ENCODE measurements at regions of chr1 and their contacts with region 1.

Region 1: DNA sequence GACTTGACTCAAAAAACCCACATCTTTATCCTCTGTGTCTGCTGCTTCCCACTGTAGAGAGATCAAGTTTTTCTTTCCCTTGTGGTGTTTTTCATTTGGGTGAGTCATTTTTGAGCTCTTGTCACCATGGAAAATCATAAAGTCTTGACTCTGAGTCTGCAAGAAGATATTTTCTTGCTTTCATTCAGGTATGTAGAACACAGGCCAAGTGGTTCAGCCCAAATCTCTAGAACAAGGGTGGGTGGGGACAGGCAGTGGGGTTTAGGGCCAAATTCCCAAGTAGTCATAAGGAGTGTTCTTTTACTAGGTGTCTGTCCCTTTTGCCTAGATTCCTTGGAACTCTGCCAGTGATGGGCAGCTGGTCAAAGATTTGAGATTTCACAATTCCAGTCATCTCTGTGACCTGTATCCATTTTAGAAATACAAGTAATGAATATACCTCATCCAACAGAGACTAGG is 21.5 kb upstream of the ARHGAP29 start:
- DNase-seq: peak; percentile 99
- ATAC-seq: peak; percentile 69
- H3K4me3 ChIP-seq: no peak overlapping the region
- H3K27ac ChIP-seq: peak overlapping the region; percentile 98
- H3K4me1 ChIP-seq: peaks cover 64% of the 10 kb centered on the region
- H3K27me3 ChIP-seq: no peaks in the 10 kb centered on the region
- CTCF ChIP-seq: no peak

Region 2: DNA sequence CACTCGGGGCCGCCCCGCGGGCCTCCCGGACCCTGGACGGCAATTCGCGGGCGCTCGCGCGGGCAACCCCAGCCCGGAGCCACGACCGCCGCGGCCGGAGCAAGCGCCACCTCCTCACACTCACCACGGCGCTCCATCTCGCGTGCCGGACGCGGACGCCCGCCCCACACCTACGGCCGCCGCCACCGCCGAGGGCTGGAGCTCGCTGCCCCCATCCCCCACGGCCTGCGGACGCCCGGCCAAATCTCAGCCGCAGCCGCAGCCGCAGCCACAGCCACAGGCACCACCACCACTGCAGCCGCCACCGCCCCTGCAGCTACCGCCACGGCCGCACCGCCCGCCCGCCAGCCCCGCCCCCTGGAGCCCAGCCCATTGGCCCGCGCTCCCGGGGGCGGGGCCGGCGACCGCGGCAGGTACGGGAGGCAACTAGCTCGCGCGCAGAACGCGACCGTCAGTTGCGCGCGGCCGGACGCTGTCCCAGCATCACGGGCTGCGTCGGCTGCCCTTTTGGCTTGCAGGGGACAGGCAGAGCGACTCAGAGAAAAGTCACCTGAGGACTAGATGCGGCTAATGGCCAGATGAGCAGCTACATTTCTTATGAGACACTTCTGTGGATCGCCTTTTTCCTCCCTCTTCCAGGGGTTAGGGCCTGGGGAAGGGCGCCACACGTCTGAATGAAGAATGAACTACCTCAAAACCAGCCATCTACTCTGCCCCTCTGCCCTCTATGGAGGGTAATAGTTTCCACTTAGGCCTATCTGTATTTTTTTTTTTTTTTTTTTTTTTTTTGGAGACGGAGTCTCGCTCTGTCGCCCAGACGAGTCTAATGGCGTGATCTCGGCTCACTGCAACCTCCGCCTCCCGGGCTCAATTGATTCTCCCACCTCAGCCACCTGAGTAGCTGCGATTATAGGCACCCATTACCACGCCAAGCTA is 21.3 kb before region 1 on chr1 and contains the start of gene ARHGAP29:
- CTCF ChIA-PET with region 1: no interaction called
- POLR2A ChIA-PET with region 1: interaction called, 10 read pairs
- intact Hi-C with region 1: no loop called
- DNase-seq: peak; percentile 94
- ATAC-seq: peak; percentile 72
- H3K4me3 ChIP-seq: peak within 1 kb of the TSS; percentile 96
- H3K27ac ChIP-seq: peak within 1 kb of the TSS; percentile 77
- H3K4me1 ChIP-seq: peaks cover 64% of the 10 kb centered on the region
- H3K27me3 ChIP-seq: no peaks in the 10 kb centered on the region
- CTCF ChIP-seq: no peak
- total RNA-seq, gene ARHGAP29: 161 and 166 TPM in 2 replicates

Region 3: DNA sequence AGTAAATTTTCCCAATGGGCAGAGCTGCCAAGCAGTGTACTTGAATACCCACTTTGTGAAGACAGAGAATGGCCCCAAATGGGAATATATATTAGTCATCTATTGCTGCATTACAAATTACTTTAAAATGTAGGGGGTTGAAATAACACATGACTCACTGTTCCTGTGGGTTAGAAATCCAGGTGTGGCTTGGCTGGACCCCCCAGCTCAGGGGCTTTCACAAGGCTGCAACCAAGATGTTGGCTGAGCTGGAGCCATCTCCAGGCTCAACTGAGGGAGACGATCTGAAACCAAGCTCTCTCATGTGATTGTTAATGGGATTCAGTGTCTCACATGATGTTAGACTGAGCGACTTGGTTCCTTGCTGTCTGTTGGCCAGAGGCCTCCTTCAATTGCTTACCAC is 11.9 kb after region 1 on chr1:
- CTCF ChIA-PET with region 1: no interaction called
- POLR2A ChIA-PET with region 1: interaction called, 11 read pairs
- intact Hi-C with region 1: no loop called
- DNase-seq: peak; percentile 96
- ATAC-seq: peak; percentile 70
- H3K4me3 ChIP-seq: no peak overlapping the region
- H3K27ac ChIP-seq: peak overlapping the region; percentile 94
- H3K4me1 ChIP-seq: peaks cover 53% of the 10 kb centered on the region
- H3K27me3 ChIP-seq: no peaks in the 10 kb centered on the region
- CTCF ChIP-seq: no peak

Region 4: GRCh38 chr1:94305704-94306103 is 46.8 kb after region 1 on chr1:
- CTCF ChIA-PET with region 1: no interaction called
- POLR2A ChIA-PET with region 1: no interaction called
- intact Hi-C with region 1: loop called (anchors 1 kb)
- DNase-seq: peak; percentile 76
- ATAC-seq: no peak
- H3K4me3 ChIP-seq: no peak overlapping the region
- H3K27ac ChIP-seq: peak overlapping the region; percentile 82
- H3K4me1 ChIP-seq: peaks cover 61% of the 10 kb centered on the region
- H3K27me3 ChIP-seq: no peaks in the 10 kb centered on the region
- CTCF ChIP-seq: no peak

Region 5: GRCh38 chr1:94329986-94330385 is 71.1 kb after region 1 on chr1:
- CTCF ChIA-PET with region 1: interaction called, 4 read pairs
- POLR2A ChIA-PET with region 1: interaction called, 24 read pairs
- intact Hi-C with region 1: loop called (anchors 1 kb)
- DNase-seq: peak; percentile 31
- ATAC-seq: no peak
- H3K4me3 ChIP-seq: no peak overlapping the region
- H3K27ac ChIP-seq: 0 out of 2 replicates have a peak overlapping the region, but pooled peaks have one; percentile 2
- H3K4me1 ChIP-seq: peaks cover 77% of the 10 kb centered on the region
- H3K27me3 ChIP-seq: no peaks in the 10 kb centered on the region
- CTCF ChIP-seq: peak; percentile 56